Left colon (tissue), 2 donors: ENCODE measurements at regions of chr5 and their contacts with region 1.

Region 1: DNA sequence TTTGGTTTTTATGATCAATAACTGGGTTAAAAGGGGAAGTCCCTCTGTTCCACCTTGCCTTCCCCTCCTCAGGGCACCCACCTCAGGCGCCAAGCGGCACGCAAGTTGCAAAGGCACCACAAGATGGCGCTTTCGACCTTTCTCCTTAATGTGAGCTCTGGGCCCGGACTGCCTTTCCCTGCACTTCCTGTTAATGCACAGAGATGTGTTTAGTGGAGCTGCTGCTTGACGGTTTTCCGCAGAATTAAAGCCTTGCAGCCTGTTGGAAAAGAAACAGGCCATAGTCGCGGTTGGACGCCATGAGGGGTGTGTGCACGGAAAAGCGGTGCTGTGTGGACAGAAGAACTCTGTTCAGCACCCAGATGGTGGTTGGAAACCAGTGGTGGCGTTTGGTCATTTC is 17.9 kb downstream of the CXCL14 start:
- DNase-seq: peak; percentile 61 to 89
- ATAC-seq: peak; percentile 98

Region 2: GRCh38 chr5:134365604-134366003 is 1195.3 kb before region 1 on chr5:
- intact Hi-C with region 1: no loop called
- DNase-seq: no peak
- ATAC-seq: no peak

Region 3: GRCh38 chr5:135085127-135085935 is 475.5 kb before region 1 on chr5:
- intact Hi-C with region 1: no loop called
- DNase-seq: peak in 1 of 2 donors; percentile 7
- ATAC-seq: no peak

Region 4: DNA sequence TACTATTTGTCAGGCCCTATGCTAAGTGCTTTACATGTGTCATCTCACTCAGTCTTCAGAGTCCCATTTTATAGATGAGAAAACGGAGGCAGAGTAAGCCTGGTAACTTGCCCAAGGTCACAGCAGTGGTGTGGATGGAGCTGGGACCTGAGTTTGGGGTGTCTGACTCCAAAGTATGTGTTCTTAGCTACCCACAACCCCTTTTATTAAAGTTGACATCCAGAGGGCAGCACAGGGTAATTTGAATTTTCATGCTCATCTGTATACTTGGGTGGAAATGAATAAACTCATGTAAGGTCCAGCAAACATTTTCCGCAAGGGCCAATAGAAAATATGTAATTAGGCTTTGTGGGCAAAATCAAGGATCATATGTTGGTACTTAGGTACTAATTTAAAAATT is 180.2 kb after region 1 on chr5:
- intact Hi-C with region 1: loop called in 1 of 2 experiments (anchors 10 kb)
- DNase-seq: no peak
- ATAC-seq: no peak

Region 5: DNA sequence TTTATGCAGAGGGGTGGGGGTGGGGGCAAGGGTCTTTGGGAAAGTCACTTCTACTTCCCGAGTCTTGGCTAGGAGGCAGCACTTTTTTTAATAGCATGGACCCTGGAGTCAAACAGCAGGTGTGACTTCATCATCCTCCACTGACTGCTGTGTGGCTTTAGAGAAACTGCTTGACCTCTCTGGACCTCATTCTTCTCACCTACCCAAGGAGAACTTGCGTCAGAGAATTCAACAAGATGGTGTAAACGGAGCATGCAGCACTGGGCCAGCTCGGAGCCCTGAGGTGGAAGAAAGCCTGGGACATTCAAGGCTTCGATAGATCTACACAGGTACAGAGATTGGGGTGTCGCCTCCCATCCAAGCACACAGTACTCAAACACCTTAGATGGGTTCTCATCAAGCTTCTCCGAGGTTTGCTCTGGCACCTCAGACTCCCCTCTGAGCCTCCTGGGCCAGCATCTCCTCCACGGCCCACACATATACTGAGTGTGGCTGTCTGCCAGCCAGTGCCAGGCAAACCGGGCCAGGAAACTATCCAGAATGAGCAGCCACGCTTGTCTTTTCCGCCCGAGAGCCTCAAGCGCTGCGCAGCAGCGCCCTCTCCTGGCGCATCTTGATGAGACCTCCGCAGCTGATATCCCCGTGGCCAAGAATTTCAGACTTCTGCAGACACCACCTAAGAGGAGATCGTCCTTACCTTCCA is 269.0 kb after region 1 on chr5:
- intact Hi-C with region 1: loop called (anchors 5 to 10 kb)
- DNase-seq: peak; percentile 44 to 83
- ATAC-seq: peak; percentile 31

Region 6: DNA sequence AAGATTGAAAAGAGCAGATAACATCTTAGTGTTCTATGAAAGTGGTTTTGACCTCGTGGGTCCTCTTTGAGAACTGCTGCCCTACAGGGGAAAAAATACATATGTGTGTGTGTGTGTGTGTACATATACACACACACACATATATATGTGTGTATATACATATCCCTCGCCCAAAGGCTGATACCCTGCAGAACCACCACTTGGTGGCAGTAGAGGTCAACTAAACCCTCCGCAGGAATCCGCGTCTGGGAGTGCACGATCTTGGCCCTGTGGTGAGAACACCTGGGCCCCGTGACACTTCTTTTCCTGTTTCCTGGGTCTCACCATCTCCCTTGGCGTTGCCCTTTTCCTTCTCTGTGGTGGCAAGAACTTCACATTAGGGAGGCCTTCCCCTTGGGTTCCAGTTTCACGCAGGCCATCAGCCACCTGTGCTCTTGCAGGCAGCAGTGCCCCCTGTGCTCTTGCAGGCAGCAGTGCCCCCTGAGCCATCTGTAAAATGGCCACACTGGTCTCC is 326.6 kb after region 1 on chr5:
- intact Hi-C with region 1: no loop called
- DNase-seq: peak; percentile 51 to 64
- ATAC-seq: peak; percentile 99